ENCODE measurements at regions of chr14 and their contacts with region 1.

Region 1: DNA sequence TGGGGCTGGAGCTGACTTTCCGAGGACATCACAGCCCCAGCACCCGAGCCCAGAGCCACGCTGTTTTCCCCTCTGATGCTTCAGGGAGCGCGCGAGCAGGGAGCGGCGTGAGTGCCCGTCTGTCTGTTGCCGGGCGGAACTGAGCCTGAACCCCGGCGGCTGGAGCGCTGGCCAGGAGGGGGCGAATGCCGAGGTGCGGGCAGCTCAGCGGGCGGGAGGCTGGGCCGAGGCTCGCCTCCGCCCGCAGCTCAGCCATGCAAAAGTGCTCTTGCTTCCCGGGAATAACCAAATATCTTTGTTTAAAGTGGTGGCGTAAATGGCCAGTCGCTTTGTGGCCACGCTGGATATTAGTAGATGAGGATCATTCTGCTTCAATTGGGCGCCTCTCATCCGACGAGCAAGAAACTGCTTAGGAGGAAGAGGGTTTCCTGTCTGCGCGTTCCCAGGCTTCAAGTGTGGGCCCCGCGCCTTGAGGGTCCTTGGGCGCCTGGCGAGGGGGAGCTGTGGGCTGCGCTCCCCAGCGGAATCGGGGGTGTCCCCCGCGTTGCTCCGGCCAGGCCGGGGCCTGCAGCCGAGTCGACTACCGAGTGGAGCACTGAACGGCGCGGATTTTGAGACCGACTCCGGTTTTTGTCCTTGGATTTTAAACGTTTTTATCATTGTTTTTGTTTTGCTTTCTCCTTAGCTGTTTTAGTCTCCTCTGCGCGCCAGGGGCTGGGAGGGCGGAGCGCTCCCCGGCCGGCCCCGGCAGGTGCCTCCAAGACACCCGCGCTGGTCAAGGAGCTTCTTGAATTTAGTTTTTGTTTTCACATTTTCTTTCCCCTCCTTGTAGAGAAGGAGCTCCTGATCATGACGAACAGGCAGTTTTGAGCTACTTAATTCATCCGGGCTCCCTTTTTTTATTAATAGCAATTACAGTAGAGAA is 831 bp upstream of the NKX2-1 start:
- DNase-seq: peak; percentile 56
- CTCF ChIP-seq: no peak

Region 2: GRCh38 chr14:36028218-36028617 is 492.6 kb before region 1 on chr14:
- in situ Hi-C with region 1: no loop called
- DNase-seq: no peak
- CTCF ChIP-seq: no peak

Region 3: GRCh38 chr14:36442824-36443241 is 78.0 kb before region 1 on chr14:
- in situ Hi-C with region 1: no loop called
- DNase-seq: no peak
- CTCF ChIP-seq: no peak

Region 4: DNA sequence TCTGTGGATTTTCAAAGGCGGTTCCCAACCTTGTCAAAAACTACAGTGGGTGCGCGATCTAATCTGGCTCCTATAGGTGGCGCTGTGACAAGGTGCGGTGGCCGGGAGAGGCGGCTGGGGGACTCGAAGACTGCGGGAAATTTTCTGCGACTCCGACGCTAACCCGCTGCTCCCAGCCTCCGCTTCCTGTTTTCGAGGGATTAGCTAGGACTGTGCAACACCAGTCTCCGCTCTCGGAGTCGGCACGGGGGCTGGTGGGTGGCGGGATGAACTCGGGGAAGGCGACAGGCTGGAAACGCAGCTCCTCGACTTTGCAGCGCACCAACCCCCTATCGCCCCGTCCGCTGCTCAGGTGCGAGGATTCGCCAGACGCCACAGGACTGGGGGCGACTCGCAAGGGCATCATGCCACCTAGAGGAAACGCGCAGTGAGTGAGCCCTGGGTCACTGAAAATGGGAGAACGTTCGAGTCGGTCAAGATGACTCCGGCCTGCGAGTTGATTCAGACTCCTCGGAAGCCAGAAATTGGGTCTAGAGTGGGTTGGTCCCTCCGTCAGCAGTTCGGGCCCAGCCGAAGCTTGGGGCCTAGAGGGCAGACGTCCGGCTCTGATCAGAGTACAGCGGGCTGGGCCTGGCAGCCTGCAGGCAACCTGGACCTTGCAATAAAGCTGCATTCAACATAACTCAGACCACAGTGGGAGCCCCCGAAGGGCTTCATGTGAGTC is 135.3 kb after region 1 on chr14:
- in situ Hi-C with region 1: loop called (anchors 10 kb)
- DNase-seq: peak; percentile 23
- CTCF ChIP-seq: peak; percentile 22

Region 5: GRCh38 chr14:36996133-36996856 is 475.4 kb after region 1 on chr14:
- in situ Hi-C with region 1: no loop called
- DNase-seq: no peak
- CTCF ChIP-seq: no peak